HCT116 (cell line): ENCODE measurements at regions of chr10 and their contacts with region 1.

Region 1: GRCh38 chr10:101095542-101096213 is 33.9 kb downstream of the KAZALD1 start:
- DNase-seq: peak; percentile 94
- ATAC-seq: peak; percentile 100
- H3K4me3 ChIP-seq: peak overlapping the region; percentile 23 to 36
- H3K27ac ChIP-seq: peak overlapping the region; percentile 20; the same call in 1 of the 2 replicates
- H3K4me1 ChIP-seq: peaks cover 0 to 24% of the 10 kb centered on the region in 2 experiments; a peak in 2 of 4 replicates
- H3K27me3 ChIP-seq: peaks cover 6% of the 10 kb centered on the region; the same call in 1 of the 2 replicates
- CTCF ChIP-seq: peak; percentile 97 to 99 (median 99)
- POLR2A ChIP-seq: no peak
- RAD21 ChIP-seq: peak; percentile 91

Region 2: DNA sequence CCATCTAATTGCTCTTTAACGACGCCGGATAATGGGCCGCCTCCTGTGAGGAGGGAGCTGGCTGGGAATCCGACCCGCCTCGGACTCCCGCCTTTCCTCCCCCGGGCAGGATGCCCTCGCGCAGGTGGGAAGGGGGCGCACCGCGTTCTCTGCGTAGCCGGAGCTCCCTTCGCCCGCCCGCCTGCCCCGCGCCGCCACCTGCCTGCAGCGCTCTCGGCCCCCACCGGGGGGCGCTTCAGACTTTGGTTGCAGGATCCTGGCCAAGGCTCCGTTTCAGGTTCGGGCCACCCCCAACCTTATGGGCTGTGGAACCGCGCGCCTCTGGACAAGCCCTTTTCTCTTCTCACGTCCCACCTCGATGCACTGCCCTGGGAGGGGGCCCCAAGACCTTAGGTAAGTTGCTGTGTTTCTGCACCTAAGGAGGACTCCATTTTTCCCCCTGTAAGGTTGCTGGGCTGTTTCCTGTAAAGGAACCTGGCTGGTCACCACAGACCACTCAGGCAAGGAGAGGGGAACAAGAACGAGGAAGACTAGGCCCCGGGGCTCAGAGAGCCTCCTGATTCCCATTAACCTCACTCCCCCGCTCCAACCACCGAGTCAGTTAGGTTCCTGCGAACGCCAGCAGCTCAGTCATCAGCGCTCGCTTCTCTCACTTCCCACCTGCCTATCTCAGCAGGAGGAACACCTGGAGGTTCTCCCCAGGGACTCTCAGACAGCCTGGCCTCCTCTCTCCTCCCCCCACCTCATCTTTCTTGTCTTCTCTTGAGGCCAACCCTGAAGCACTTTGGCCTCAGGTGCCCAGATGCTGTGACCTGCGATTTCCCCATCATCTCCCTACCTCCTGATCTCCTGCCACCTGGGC is 45.2 kb before region 1 on chr10:
- CTCF ChIA-PET with region 1: interaction called, 14 read pairs
- POLR2A ChIA-PET with region 1: interaction called, 3 read pairs
- RAD21 ChIA-PET with region 1: interaction called in 1 of 2 experiments, 3 read pairs
- intact Hi-C with region 1: no loop called
- DNase-seq: no peak
- ATAC-seq: peak; percentile 90
- H3K4me3 ChIP-seq: peak overlapping the region in 1 of 2 experiments; percentile 38; a peak in 3 of 4 replicates
- H3K27ac ChIP-seq: no peak overlapping the region; the same call in 1 of the 2 replicates
- H3K4me1 ChIP-seq: peaks cover 18 to 36% of the 10 kb centered on the region in 2 experiments
- H3K27me3 ChIP-seq: no peaks in the 10 kb centered on the region
- CTCF ChIP-seq: peak in 2 of 3 experiments; percentile 98; a peak in 4 of 6 replicates
- POLR2A ChIP-seq: no peak
- RAD21 ChIP-seq: no peak

Region 3: DNA sequence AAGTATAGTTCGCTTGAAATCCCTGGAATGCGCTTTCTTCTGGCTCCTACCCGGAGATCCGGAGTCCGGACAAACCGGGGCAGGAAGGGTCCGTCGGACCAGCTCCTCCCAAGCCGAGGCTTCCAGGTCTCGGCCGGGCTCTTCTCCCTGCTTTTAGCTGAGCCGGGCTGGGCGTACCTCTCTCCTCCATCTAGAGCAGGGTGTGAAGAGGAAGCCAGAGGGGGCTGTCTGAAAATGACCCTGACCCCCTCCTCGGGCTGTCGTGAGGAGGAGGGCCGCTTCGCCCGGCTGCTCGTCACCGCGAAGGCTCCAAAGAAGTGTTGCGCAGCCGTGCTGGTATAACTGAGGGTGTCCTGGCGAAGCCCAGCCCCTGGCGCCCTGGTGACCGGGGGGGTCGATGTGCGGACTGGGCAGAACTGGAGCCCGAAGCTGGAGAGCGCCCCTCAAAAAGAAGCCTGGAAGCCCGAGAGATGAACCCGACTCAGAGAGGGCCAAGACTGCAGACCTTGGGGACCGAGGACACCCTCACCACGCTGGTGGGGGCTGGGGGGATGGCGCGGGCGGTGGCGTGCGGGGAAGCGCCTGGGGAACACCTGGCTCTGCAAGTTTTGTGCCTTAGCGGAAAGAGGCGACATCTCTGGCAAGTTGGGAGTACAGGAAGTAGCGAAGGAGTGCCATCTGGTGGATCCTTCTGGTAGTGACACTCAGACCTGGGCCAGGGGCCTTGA is 28.2 kb before region 1 on chr10:
- CTCF ChIA-PET with region 1: interaction called, 38 read pairs
- POLR2A ChIA-PET with region 1: no interaction called
- RAD21 ChIA-PET with region 1: interaction called in 1 of 2 experiments, 3 read pairs
- intact Hi-C with region 1: no loop called
- DNase-seq: peak; percentile 91
- ATAC-seq: peak; percentile 39
- H3K4me3 ChIP-seq: peak overlapping the region; percentile 66 to 71
- H3K27ac ChIP-seq: peak overlapping the region; percentile 93
- H3K4me1 ChIP-seq: peaks cover 37 to 79% of the 10 kb centered on the region in 2 experiments
- H3K27me3 ChIP-seq: no peaks in the 10 kb centered on the region
- CTCF ChIP-seq: peak in 2 of 3 experiments; percentile 89 to 94; a peak in 4 of 6 replicates
- POLR2A ChIP-seq: no peak
- RAD21 ChIP-seq: no peak

Region 4: DNA sequence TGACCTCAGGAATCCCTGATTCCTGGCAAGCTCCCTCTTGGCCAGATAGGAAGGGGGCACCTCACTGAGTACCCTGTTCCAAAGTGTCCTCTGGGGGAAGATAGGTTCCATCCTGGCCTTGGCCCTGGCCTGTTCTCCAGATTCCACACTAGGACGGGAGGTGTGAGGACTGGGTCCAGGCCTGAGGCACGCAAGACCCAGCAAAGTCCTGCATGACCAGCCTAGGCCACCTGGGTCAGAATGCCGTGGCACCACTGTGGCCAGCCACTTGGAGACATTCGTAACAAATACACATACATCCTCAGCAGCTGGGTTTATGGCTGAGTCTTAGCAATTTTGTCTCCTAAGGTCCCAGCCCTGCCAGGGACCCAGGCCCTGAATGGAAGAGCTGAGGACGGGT is 12.1 kb after region 1 on chr10:
- CTCF ChIA-PET with region 1: interaction called, 36 read pairs
- POLR2A ChIA-PET with region 1: no interaction called
- RAD21 ChIA-PET with region 1: no interaction called
- intact Hi-C with region 1: no loop called
- DNase-seq: no peak
- ATAC-seq: no peak
- H3K4me3 ChIP-seq: no peak overlapping the region
- H3K27ac ChIP-seq: no peak overlapping the region
- H3K4me1 ChIP-seq: peaks cover 13% of the 10 kb centered on the region in 2 experiments; a peak in 3 of 4 replicates
- H3K27me3 ChIP-seq: no peaks in the 10 kb centered on the region
- CTCF ChIP-seq: no peak
- POLR2A ChIP-seq: no peak
- RAD21 ChIP-seq: no peak

Region 5: DNA sequence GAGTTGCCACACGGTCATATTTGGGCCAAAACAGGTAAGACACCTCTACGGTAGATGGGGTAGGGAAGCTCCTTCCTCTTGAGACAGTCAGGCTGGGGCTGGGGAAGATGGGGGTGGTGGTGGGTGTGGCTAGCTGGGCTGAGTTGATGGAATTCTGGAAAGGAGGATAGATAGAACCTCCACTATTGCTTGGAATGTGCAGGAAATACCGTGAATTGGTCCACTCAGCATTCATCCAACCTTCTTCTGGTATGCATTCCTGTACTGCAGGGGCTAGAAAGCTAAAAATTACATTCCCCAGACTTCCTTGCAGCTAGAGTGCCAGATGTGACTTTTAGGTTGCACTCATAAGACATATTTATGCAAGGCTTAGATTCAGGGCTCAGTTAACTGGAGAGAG is 60.2 kb after region 1 on chr10:
- CTCF ChIA-PET with region 1: interaction called, 10 read pairs
- POLR2A ChIA-PET with region 1: no interaction called
- RAD21 ChIA-PET with region 1: interaction called in 1 of 2 experiments, 4 read pairs
- intact Hi-C with region 1: no loop called
- DNase-seq: no peak
- ATAC-seq: no peak
- H3K4me3 ChIP-seq: no peak overlapping the region
- H3K27ac ChIP-seq: no peak overlapping the region
- H3K4me1 ChIP-seq: no peaks in the 10 kb centered on the region
- H3K27me3 ChIP-seq: no peaks in the 10 kb centered on the region
- CTCF ChIP-seq: no peak
- POLR2A ChIP-seq: no peak
- RAD21 ChIP-seq: no peak